Transverse colon (tissue), 4 donors: ENCODE measurements at regions of chr7 and their contacts with region 1.

Region 1: DNA sequence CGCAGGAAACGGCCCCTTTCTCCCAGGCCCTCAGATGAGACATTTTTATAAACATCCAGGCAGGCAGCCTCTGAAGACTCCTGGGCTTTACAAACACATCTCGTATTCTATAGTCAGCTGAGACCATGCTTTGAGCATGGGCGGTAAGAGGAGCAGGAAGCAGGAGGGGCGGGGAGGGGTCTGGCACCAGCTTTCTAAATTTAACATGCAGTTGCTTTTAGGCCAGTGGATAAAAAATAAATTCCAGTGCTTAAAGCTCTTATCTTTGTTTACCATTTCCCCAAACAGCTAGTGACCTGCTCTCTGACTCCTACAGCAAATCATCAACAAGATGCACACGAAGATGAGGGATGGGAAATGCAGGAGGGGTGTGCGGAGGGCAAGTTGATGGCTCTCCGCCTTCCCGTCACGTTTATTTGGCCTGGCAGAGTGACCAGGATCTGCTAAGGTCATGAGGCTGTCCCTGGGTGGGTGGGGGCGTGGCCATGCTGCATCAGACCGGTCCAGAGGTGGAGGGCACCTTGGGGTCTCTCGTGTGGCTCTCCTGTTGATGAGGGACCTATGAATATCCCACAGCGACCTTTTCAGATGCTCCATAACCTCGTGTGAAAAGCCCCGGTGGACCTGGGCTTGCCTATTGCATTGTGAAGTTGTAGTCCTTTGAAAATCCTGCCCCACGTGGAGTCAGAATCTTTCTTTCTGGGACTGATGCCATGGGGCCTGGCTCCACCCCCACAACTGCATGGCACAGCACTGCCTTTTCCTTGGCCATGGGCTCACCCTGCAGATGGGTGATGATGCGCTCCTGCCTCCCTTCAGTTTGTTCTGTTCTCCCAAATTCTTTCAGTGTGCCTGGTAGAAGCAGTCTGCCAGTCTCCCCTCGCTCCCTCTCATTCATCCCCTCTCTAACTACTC is 67.5 kb downstream of the PARP12 start:
- DNase-seq: no peak
- H3K4me3 ChIP-seq: no peak overlapping the region
- H3K27ac ChIP-seq: no peak overlapping the region
- H3K4me1 ChIP-seq: no peaks in the 10 kb centered on the region
- H3K27me3 ChIP-seq: no peaks in the 10 kb centered on the region
- CTCF ChIP-seq: no peak
- EP300 ChIP-seq: no peak
- POLR2A ChIP-seq: no peak

Region 2: GRCh38 chr7:139086454-139086853 is 908.8 kb before region 1 on chr7:
- in situ Hi-C with region 1: no loop called
- intact Hi-C with region 1: no loop called
- DNase-seq: no peak
- H3K4me3 ChIP-seq: no peak overlapping the region
- H3K27ac ChIP-seq: no peak overlapping the region
- H3K4me1 ChIP-seq: no peaks in the 10 kb centered on the region
- H3K27me3 ChIP-seq: no peaks in the 10 kb centered on the region
- CTCF ChIP-seq: no peak
- EP300 ChIP-seq: no peak
- POLR2A ChIP-seq: no peak

Region 3: GRCh38 chr7:139645572-139646523 is 349.4 kb before region 1 on chr7:
- in situ Hi-C with region 1: loop called (anchors 5 to 10 kb)
- intact Hi-C with region 1: no loop called
- DNase-seq: peak; percentile 88
- H3K4me3 ChIP-seq: no peak overlapping the region
- H3K27ac ChIP-seq: no peak overlapping the region
- H3K4me1 ChIP-seq: peaks cover 0 to 27% (median 1%) of the 10 kb centered on the region in 4 donors
- H3K27me3 ChIP-seq: no peaks in the 10 kb centered on the region
- CTCF ChIP-seq: peak; percentile 87 to 94 (median 91)
- EP300 ChIP-seq: no peak
- POLR2A ChIP-seq: no peak

Region 4: DNA sequence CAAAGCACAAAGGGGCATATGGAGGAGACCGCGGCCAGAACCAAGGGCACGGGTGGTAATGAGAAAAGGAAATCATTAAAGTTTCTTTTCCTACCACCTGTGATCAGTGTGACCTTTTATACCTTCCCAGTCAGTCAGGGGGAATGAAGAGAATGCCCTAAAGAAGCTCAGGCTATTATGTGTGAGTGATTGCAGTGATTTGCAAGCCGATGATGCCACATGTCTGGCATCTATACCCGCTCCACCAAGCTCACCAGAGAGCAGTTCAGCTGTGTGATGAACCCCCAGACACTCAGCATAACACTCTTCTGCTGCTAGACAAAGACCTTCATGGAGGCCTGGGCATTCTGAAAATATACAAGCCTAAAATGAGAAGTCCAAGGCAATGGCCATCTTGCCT is 1449.7 kb after region 1 on chr7:
- in situ Hi-C with region 1: no loop called
- intact Hi-C with region 1: loop called (anchors 5 kb)
- DNase-seq: no peak
- H3K4me3 ChIP-seq: no peak overlapping the region
- H3K27ac ChIP-seq: no peak overlapping the region
- H3K4me1 ChIP-seq: no peaks in the 10 kb centered on the region
- H3K27me3 ChIP-seq: no peaks in the 10 kb centered on the region
- CTCF ChIP-seq: no peak
- EP300 ChIP-seq: no peak
- POLR2A ChIP-seq: no peak